Activated T-helper 2 cell treated with anti-CD3 and anti-CD28 coated beads, Interferon-gamma antibody, Interleukin-2, Interleukin-4, amounts not matched to agents 10 μg/mL and 5 μg/mL and 100 μg/mL, durations not matched to agents 14 hours and 24 hours and 36 hours (primary cell): ENCODE measurements at regions of chr20 and their contacts with region 1.

Region 1: DNA sequence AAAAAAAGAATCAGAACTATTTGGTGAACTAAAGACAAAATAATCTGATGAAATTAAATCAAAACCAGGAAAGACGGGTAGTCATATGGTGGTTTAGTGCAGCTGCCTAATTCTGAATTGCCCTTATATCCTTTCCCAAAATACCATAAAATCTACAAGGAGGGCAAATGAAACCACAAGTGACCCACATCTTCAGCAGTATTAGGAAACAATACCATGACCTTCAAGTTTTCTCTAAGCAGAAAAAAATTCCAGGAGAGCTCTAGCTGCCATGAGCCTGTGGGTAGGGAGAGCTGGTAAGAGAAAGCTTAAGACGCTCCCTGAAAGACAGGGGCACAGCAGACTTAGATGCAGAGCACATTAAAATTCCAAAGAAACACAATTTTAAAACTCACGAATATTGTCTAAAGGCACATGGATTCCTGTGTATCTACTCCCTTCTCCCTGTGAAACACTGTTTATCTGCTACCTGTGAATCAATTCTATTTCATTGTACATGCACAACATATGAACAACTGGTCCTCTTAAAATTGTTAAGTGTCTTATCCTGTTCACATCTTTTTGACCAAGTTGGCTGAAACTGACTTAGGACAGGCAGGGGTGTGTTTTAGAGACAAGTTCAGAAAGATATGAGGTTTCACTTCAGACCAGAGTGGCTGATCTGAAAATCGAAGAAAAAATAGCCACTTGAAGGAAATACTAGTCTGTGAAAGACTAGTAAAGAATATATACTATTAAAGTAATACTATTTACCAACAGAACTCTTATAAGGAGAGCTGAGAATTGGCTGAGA is 153.6 kb upstream of the SHLD1 start:
- DNase-seq: no peak
- H3K4me3 Mint-ChIP-seq: no peak overlapping the region
- H3K27ac Mint-ChIP-seq: peak overlapping the region; percentile 56
- H3K4me1 Mint-ChIP-seq: peaks cover 50% of the 10 kb centered on the region
- H3K27me3 Mint-ChIP-seq: no peaks in the 10 kb centered on the region

Region 2: DNA sequence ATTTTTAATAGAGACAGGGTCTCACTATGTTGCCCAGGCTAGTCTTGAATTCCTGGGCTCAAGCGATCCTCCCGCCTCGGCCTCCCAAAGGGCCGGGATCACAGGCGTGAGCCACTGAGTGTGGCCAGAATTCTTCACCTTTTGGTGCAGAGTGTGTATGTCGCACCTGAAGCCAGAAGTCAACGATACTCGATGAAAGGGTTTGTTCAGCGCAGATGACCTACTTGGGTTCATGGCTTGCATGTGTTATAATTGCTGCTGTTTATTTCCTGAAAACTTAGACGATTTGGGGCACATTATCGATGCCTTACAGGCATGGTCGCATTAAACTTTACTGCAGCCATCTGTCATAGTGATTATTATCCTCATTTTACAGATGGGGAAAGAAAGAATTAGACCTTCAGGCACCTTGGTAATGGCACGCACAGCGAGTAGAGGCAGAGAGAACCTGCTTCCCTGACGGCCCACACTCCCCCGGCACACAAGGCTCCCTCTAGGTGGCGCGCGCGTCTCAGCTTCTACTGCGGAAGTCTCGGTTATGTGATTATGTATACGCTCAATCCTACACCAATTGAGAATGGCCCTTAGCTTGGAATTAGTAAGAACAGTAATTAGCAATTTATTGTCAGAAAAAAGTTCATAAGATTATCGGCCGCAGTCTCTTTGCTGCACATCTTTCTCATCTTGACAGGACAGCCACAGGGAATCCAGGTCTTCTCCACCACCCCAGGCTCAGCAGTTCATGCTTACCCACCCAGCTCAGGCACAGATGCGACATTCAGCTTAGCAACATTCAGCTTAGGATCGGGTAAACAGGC is 67.1 kb before region 1 on chr20:
- intact Hi-C with region 1: no loop called
- DNase-seq: peak; percentile 80
- H3K4me3 Mint-ChIP-seq: peak overlapping the region; percentile 24
- H3K27ac Mint-ChIP-seq: peak overlapping the region; percentile 69
- H3K4me1 Mint-ChIP-seq: peaks cover 18% of the 10 kb centered on the region
- H3K27me3 Mint-ChIP-seq: no peaks in the 10 kb centered on the region

Region 3: DNA sequence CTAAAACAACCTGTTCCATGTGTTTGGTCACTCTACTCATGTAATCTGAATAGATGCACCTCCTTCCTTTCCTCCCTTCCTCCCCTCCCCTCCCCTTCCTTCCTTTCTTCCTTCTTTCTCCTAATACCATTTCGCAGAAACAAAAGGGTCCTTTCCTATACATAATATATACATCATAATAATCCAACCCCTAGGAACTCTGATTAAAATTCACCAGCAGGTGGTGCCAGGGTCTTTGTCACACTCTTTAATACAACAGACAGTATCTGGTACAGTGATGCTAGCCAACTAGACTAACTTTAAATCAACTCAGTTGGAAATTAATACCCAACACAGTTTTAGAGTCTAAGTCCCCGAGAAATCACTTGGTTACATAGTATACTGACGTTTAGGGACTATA is 27.6 kb before region 1 on chr20:
- intact Hi-C with region 1: loop called (anchors 1 kb)
- DNase-seq: peak; percentile 43
- H3K4me3 Mint-ChIP-seq: no peak overlapping the region
- H3K27ac Mint-ChIP-seq: peak overlapping the region; percentile 15
- H3K4me1 Mint-ChIP-seq: peaks cover 25% of the 10 kb centered on the region
- H3K27me3 Mint-ChIP-seq: no peaks in the 10 kb centered on the region

Region 4: DNA sequence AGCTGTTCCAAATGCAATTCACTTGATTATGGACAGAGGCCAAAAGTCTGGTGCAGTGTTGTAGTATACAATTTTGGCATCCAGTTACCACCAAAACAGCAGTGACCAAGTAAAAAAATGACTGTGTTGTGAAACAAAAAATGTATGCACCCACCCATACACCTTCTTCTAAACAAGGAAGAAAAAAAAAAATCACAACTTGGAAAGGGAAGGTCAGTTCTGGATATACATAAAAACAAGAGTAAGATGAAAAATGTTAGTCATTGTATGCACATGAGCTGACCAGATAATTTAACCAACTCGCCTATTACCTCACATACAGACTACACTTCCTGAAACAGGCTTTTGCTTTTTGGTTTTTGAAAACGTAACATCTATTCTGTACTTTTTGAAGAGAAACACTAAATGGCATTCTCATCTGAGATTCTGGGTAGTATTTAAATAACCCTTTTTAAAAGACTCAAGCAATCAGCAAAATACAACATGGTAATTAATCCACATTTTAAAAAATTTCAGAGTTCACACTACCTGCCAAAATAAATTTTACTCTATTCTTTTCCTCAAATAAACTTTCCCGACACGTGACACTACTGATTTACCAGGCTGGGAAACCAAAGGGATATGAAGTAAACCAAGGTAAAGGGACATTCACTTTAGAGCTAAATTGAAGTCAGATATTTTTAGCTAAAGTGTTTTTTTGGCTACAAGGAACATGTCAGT is 12.0 kb after region 1 on chr20:
- intact Hi-C with region 1: loop called (anchors 1 kb)
- DNase-seq: no peak
- H3K4me3 Mint-ChIP-seq: peak overlapping the region; percentile 100
- H3K27ac Mint-ChIP-seq: peak overlapping the region; percentile 82
- H3K4me1 Mint-ChIP-seq: peaks cover 46% of the 10 kb centered on the region
- H3K27me3 Mint-ChIP-seq: no peaks in the 10 kb centered on the region

Region 5: DNA sequence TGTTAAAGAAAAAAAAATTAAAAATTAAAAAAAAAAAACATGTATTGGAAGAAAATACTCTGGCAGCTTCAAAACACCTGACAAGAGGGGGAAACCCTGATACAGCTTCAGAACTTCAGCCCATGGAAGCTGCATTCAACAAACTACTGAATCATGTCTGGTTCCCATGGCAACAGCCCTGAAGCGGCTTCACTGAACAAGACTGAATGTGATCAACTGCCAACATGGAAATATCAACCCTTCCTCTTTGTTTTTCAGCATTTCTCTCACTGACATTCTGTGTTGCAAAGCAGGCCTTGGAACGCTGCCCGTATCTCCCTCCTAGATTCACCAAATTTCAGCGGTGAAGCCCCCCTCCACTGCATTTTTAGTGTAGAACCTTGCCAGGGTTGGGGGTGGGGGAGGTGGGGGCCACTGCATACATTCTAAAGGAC is 62.3 kb after region 1 on chr20:
- intact Hi-C with region 1: loop called (anchors 2 kb)
- DNase-seq: peak; percentile 12
- H3K4me3 Mint-ChIP-seq: no peak overlapping the region
- H3K27ac Mint-ChIP-seq: peak overlapping the region; percentile 78
- H3K4me1 Mint-ChIP-seq: peaks cover 15% of the 10 kb centered on the region
- H3K27me3 Mint-ChIP-seq: no peaks in the 10 kb centered on the region